Activated T-helper 1 cell treated with anti-CD3 and anti-CD28 coated beads, Interleukin-12 subunit alpha, Interleukin-12 subunit beta, Interleukin-2, Interleukin-4 antibody, amounts not matched to agents 30 ng/mL and 10 ng/mL and 1 ng/mL, durations not matched to agents 14 hours and 24 hours and 36 hours (primary cell): ENCODE measurements at regions of chr19 and their contacts with region 1.

Region 1: GRCh38 chr19:53195265-53195903 is 2.2 kb upstream of the ZNF665 start:
- DNase-seq: peak; percentile 65
- H3K4me3 Mint-ChIP-seq: peak overlapping the region; percentile 46
- H3K27ac Mint-ChIP-seq: no peak overlapping the region
- H3K4me1 Mint-ChIP-seq: peaks cover 32% of the 10 kb centered on the region
- H3K27me3 Mint-ChIP-seq: no peaks in the 10 kb centered on the region

Region 2: GRCh38 chr19:52189735-52190486 is 1005.5 kb before region 1 on chr19 and contains the start of gene PPP2R1A:
- intact Hi-C with region 1: loop called (anchors 10 kb)
- DNase-seq: peak; percentile 97
- H3K4me3 Mint-ChIP-seq: peak within 1 kb of the TSS; percentile 98
- H3K27ac Mint-ChIP-seq: peak within 1 kb of the TSS; percentile 99
- H3K4me1 Mint-ChIP-seq: peaks cover 45% of the 10 kb centered on the region
- H3K27me3 Mint-ChIP-seq: no peaks in the 10 kb centered on the region
- total RNA-seq, gene PPP2R1A: 214 and 215 TPM in 2 replicates

Region 3: GRCh38 chr19:52734893-52735661 is 460.3 kb before region 1 on chr19 and contains the start of gene ZNF611:
- intact Hi-C with region 1: loop called (anchors 5 kb)
- DNase-seq: peak; percentile 97
- H3K4me3 Mint-ChIP-seq: peak within 1 kb of the TSS; percentile 91
- H3K27ac Mint-ChIP-seq: peak within 1 kb of the TSS; percentile 92
- H3K4me1 Mint-ChIP-seq: peaks cover 27% of the 10 kb centered on the region
- H3K27me3 Mint-ChIP-seq: no peaks in the 10 kb centered on the region
- total RNA-seq, gene ZNF611: 17.0 and 21.0 TPM in 2 replicates

Region 4: GRCh38 chr19:53147645-53148044 is 47.7 kb before region 1 on chr19:
- intact Hi-C with region 1: no loop called
- DNase-seq: no peak
- H3K4me3 Mint-ChIP-seq: no peak overlapping the region
- H3K27ac Mint-ChIP-seq: no peak overlapping the region
- H3K4me1 Mint-ChIP-seq: no peaks in the 10 kb centered on the region
- H3K27me3 Mint-ChIP-seq: no peaks in the 10 kb centered on the region

Region 5: DNA sequence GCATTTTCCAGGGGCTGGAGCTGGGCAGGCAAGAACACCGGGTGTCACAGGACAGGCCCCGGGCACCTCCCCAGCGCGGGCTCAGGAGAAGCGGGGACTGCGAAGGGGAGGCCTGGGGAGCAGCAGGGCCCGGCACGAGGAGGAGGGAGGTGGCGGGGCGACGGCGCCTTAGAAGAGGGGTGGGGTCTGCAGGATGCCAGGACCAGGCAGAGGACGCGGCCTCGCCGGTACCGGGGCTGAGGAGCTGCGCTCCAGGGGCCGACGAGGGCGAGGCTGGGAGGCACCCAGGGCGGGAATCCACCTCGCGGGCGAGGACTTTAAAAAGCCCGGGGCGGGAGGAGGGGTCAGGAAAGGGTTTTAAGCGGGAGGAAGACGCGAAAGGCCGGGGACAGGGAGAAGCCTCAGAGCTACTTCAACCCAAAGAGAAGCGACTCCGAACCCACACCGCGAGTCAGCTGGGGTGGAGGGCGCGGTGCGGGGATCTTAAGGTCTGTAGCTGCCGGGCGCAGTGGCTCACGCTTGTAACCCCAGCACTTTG is 37.2 kb before region 1 on chr19:
- intact Hi-C with region 1: loop called (anchors 1 kb)
- DNase-seq: peak; percentile 16
- H3K4me3 Mint-ChIP-seq: peak overlapping the region; percentile 85
- H3K27ac Mint-ChIP-seq: peak overlapping the region; percentile 71
- H3K4me1 Mint-ChIP-seq: peaks cover 15% of the 10 kb centered on the region
- H3K27me3 Mint-ChIP-seq: no peaks in the 10 kb centered on the region

Region 6: DNA sequence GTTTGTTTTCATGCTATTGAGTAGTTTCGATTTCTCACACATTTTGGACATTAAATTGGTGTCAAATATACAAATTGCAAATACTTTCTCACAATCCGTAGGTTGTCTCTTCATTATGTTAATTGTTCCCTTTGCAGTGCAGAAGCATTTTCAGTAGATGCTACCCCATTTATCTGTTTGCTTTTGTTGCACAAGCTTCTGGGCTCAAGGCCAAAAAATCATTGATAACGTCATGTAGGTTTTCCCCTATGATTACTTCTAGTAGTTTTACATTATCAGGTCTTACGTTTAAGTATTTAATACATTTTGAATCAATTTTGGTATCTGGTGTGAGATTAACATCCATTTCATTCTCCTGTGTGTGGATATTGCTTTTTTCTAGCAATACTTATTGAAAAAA is 22.5 kb before region 1 on chr19:
- intact Hi-C with region 1: no loop called
- DNase-seq: no peak
- H3K4me3 Mint-ChIP-seq: no peak overlapping the region
- H3K27ac Mint-ChIP-seq: no peak overlapping the region
- H3K4me1 Mint-ChIP-seq: no peaks in the 10 kb centered on the region
- H3K27me3 Mint-ChIP-seq: no peaks in the 10 kb centered on the region

Region 7: GRCh38 chr19:53424968-53425597 is 229.7 kb after region 1 on chr19:
- intact Hi-C with region 1: loop called (anchors 1 kb)
- DNase-seq: peak; percentile 46
- H3K4me3 Mint-ChIP-seq: no peak overlapping the region
- H3K27ac Mint-ChIP-seq: no peak overlapping the region
- H3K4me1 Mint-ChIP-seq: peaks cover 5% of the 10 kb centered on the region
- H3K27me3 Mint-ChIP-seq: no peaks in the 10 kb centered on the region

Region 8: DNA sequence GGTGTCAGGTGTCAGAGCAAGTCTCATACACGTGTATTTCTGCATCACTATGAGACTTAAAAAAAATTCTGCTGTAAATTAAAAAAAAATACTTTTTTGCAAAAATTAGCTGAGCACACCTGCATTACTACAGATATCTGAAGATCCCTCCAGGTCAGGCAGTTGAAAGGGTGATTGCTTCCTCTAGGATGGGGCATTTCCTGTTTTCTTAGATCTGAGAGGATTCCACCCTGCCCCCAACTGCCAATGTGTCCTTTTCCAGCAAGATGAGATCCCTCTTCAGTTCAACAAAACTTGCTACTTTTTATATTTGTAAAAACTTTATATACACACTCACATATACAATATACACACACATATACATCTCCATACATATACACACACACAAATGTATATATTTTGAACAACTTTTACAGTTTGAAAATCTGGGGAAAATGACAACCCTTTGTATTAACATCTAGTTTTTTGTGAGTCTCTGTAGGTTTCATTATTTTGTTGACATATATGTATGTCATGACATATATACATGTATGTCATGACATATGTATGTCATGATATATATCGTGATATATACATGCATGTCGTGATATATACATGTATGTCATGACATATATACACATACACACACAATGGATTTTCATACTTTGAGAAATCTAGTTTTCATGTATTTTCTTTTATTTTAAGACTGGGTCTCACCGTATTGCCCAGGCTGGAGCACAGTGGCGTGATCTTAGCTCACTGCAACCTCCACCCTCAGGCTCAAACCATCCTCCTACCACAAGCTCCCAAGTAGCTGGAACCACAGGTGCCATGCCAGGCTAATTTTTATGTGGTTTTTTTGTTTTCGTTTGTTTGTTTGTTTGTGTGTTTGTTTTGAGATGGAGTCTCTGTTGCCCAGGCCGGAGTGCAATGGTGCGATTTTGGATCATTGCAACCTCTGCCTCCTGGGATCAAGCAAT is 289.9 kb after region 1 on chr19:
- intact Hi-C with region 1: no loop called
- DNase-seq: no peak
- H3K4me3 Mint-ChIP-seq: no peak overlapping the region
- H3K27ac Mint-ChIP-seq: no peak overlapping the region
- H3K4me1 Mint-ChIP-seq: no peaks in the 10 kb centered on the region
- H3K27me3 Mint-ChIP-seq: no peaks in the 10 kb centered on the region

Region 9: GRCh38 chr19:53520550-53521372 is 325.4 kb after region 1 on chr19:
- intact Hi-C with region 1: loop called (anchors 1 kb)
- DNase-seq: peak; percentile 81
- H3K4me3 Mint-ChIP-seq: peak overlapping the region; percentile 98
- H3K27ac Mint-ChIP-seq: peak overlapping the region; percentile 84
- H3K4me1 Mint-ChIP-seq: peaks cover 18% of the 10 kb centered on the region
- H3K27me3 Mint-ChIP-seq: no peaks in the 10 kb centered on the region